ENCODE measurements at regions of chr9 and their contacts with region 1.

Region 1: DNA sequence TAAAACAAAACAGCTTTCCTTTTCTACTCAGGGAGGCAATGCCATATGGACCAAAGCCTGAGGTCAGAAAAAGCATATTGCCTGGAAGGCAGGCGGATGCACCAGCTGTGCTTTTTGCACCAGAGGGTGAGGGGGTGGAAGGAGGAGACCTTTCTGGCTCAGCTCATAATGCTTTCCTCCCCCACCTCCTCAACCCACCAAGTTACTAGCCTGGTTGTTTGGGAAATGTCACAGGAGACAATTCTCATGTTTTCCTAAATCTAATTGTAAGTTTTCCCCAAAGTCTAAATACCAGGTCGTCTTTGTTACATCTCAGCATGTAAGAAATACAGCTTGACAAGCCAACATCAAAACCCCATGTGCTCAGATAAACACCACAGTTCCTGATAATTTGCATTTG is 72.6 kb upstream of the DMRTA1 start:
- DNase-seq: no peak
- ATAC-seq: no peak
- H3K4me3 ChIP-seq: no peak overlapping the region
- H3K27ac ChIP-seq: no peak overlapping the region
- H3K4me1 ChIP-seq: no peaks in the 10 kb centered on the region
- H3K27me3 ChIP-seq: no peaks in the 10 kb centered on the region
- CTCF ChIP-seq: no peak
- EP300 ChIP-seq: no peak
- POLR2A ChIP-seq: no peak
- RAD21 ChIP-seq: no peak

Region 2: GRCh38 chr9:22316645-22317044 is 57.4 kb before region 1 on chr9:
- CTCF ChIA-PET with region 1: no interaction called
- POLR2A ChIA-PET with region 1: no interaction called
- RAD21 ChIA-PET with region 1: no interaction called
- SMC1A ChIA-PET with region 1: no interaction called
- in situ Hi-C with region 1: no loop called
- intact Hi-C with region 1: no loop called
- DNase-seq: no peak
- ATAC-seq: no peak
- H3K4me3 ChIP-seq: no peak overlapping the region
- H3K27ac ChIP-seq: no peak overlapping the region
- H3K4me1 ChIP-seq: no peaks in the 10 kb centered on the region
- H3K27me3 ChIP-seq: no peaks in the 10 kb centered on the region
- CTCF ChIP-seq: no peak
- EP300 ChIP-seq: no peak
- POLR2A ChIP-seq: no peak
- RAD21 ChIP-seq: no peak

Region 3: GRCh38 chr9:22389271-22389670 is 15.2 kb after region 1 on chr9:
- CTCF ChIA-PET with region 1: no interaction called
- POLR2A ChIA-PET with region 1: no interaction called
- RAD21 ChIA-PET with region 1: no interaction called
- SMC1A ChIA-PET with region 1: no interaction called
- in situ Hi-C with region 1: no loop called
- intact Hi-C with region 1: loop called (anchors 2 kb)
- DNase-seq: no peak
- ATAC-seq: no peak
- H3K4me3 ChIP-seq: no peak overlapping the region
- H3K27ac ChIP-seq: no peak overlapping the region
- H3K4me1 ChIP-seq: no peaks in the 10 kb centered on the region
- H3K27me3 ChIP-seq: no peaks in the 10 kb centered on the region
- CTCF ChIP-seq: no peak
- EP300 ChIP-seq: no peak
- POLR2A ChIP-seq: no peak
- RAD21 ChIP-seq: no peak

Measured in GM12878 (cell line).